Activated CD4-positive, alpha-beta memory T cell treated with anti-CD3 and anti-CD28 coated beads for 36 hours (primary cell): ENCODE measurements at regions of chr2 and their contacts with region 1.

Region 1: DNA sequence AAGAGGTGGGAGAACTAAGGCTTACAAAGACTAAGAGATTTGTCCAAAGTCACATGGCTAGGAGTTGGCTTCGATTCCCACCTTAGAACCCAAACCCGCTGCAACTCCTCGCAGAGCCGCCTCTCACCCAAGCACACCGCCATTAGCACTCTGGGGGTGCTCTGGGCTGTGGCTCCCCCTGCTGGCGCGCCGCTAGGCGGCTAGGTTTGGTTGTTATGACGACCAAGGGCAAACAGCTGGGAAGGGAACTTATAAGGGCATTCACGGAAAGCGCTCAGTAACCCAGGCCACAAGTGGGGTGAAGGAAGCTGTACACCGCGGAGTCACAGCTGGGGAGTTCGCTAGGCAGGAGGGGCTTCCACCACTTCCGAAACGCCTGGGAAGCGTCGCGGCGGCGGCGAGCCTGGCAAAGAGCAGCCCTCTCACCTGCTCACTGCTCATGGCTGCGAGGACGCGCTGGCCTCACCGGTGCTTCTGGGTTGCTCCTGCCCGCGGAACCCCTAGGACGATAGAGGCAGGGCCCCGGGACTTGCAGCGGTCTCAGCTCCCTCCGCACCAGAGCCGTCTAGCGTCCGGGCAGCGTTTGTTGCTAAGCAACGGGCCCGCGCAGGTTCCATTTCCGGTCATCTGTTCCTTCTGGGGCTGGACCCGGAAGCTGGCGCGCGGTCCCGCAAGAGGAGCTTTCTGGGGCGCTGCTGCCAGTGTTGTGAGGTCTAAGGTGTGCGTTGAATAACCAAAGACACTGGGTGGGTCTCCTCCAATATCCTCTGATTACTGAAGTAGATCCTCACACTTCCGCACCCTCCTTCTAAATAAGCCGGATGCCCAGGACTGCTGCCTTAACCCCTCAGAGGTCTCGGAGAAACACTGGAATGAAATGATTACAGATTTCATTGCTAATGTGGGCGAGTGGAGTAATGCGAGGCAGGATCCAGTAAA is at the start of gene DNAH7:
- DNase-seq: peak; percentile 95
- H3K4me3 Mint-ChIP-seq: peak within 1 kb of the TSS; percentile 88
- H3K27ac Mint-ChIP-seq: peak within 1 kb of the TSS; percentile 46
- H3K4me1 Mint-ChIP-seq: peaks cover 9% of the 10 kb centered on the region
- H3K27me3 Mint-ChIP-seq: peaks cover 2% of the 10 kb centered on the region
- total RNA-seq, gene DNAH7: 0.07 to 0.17 TPM

Region 2: GRCh38 chr2:195318440-195319111 is 750.0 kb before region 1 on chr2:
- CTCF ChIA-PET with region 1: interaction called, 7 read pairs
- POLR2A ChIA-PET with region 1: no interaction called
- intact Hi-C with region 1: loop called (anchors 5 kb)
- DNase-seq: peak; percentile 35
- H3K4me3 Mint-ChIP-seq: no peak overlapping the region
- H3K27ac Mint-ChIP-seq: no peak overlapping the region
- H3K4me1 Mint-ChIP-seq: peaks cover 8% of the 10 kb centered on the region
- H3K27me3 Mint-ChIP-seq: no peaks in the 10 kb centered on the region

Region 3: GRCh38 chr2:195559431-195559914 is 509.1 kb before region 1 on chr2:
- CTCF ChIA-PET with region 1: interaction called, 3 read pairs
- POLR2A ChIA-PET with region 1: no interaction called
- intact Hi-C with region 1: loop called (anchors 5 kb)
- DNase-seq: peak; percentile 91
- H3K4me3 Mint-ChIP-seq: peak overlapping the region; percentile 63
- H3K27ac Mint-ChIP-seq: peak overlapping the region; percentile 92
- H3K4me1 Mint-ChIP-seq: peaks cover 61% of the 10 kb centered on the region
- H3K27me3 Mint-ChIP-seq: no peaks in the 10 kb centered on the region

Region 4: DNA sequence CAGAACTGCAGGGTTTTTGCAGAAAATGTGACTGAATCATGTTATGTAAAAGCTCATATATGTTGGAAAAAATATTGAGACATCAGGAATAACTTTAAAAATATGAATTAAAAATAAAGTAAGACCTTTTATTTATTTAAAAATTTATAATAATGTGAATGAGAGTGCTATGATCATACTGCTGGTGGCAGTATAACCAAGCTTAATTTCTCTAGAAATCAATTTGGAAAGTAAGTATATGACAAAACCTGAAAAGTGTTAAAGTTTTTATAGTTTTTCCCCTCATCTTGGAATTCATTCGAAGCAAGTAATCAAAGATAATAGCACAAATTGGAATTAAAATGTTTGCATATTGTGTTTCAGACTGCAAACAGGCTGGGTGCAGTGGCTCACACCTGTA is 404.0 kb before region 1 on chr2:
- CTCF ChIA-PET with region 1: interaction called, 46 read pairs
- POLR2A ChIA-PET with region 1: interaction called, 3 read pairs
- intact Hi-C with region 1: no loop called
- DNase-seq: no peak
- H3K4me3 Mint-ChIP-seq: no peak overlapping the region
- H3K27ac Mint-ChIP-seq: peak overlapping the region; percentile 18
- H3K4me1 Mint-ChIP-seq: peaks cover 55% of the 10 kb centered on the region
- H3K27me3 Mint-ChIP-seq: no peaks in the 10 kb centered on the region

Region 5: DNA sequence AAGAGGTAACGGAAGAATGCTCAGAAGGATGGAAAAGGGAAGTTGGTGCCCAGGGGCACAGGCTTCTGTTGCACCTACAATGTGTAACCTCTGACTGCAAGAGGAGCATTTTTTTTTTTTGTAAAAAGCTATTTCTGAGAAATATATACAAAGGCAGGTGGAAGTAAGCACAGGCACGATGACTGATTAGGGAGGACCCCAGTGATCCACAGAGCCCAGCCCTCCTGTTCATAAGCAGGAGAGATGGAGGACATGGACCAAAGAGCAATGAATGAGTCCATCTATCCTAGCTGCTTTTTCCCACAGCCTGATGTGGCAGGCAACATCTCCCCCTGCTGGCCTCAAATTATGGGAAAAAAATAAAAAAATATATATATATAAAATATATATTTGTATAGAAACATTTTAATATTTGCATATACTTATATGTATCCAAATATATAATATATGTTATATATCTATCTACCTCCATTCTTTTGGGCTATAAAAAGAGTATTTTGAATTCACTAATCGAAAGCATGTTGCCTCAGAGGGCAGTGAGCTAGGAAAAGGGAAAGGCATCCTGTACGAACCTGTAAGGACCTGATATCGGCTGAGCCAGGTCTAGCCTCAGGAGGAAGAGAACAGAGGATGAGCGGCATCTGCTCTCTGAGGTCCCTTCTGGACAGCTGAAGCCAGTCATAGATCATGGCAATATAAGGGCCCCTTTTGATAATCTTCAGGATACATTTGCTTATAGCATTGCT is 268.8 kb after region 1 on chr2:
- CTCF ChIA-PET with region 1: interaction called, 226 read pairs
- POLR2A ChIA-PET with region 1: no interaction called
- intact Hi-C with region 1: no loop called
- DNase-seq: peak; percentile 31
- H3K4me3 Mint-ChIP-seq: no peak overlapping the region
- H3K27ac Mint-ChIP-seq: no peak overlapping the region
- H3K4me1 Mint-ChIP-seq: peaks cover 5% of the 10 kb centered on the region
- H3K27me3 Mint-ChIP-seq: no peaks in the 10 kb centered on the region

Region 6: DNA sequence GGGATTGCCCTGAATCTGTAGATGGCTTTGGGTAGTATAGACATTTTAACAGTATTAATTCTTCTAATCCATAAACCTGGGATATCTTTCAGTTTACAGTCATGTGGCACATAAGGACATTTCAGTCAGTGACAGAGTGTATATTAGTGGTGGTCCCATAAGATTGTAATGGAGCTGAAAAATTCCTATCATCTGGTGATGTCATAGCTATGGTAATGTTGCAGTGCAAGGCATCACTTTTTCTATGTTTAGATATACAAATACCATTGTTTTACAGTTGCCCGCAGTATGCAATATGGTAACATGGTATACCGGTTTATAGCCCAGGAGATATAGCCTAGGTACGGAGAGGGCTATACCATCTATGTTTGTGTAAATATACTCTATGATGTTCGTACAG is 580.7 kb after region 1 on chr2:
- CTCF ChIA-PET with region 1: no interaction called
- POLR2A ChIA-PET with region 1: no interaction called
- intact Hi-C with region 1: no loop called
- DNase-seq: no peak
- H3K4me3 Mint-ChIP-seq: no peak overlapping the region
- H3K27ac Mint-ChIP-seq: no peak overlapping the region
- H3K4me1 Mint-ChIP-seq: no peaks in the 10 kb centered on the region
- H3K27me3 Mint-ChIP-seq: no peaks in the 10 kb centered on the region